ENCODE measurements at regions of chr20 and their contacts with region 1.

Region 1: DNA sequence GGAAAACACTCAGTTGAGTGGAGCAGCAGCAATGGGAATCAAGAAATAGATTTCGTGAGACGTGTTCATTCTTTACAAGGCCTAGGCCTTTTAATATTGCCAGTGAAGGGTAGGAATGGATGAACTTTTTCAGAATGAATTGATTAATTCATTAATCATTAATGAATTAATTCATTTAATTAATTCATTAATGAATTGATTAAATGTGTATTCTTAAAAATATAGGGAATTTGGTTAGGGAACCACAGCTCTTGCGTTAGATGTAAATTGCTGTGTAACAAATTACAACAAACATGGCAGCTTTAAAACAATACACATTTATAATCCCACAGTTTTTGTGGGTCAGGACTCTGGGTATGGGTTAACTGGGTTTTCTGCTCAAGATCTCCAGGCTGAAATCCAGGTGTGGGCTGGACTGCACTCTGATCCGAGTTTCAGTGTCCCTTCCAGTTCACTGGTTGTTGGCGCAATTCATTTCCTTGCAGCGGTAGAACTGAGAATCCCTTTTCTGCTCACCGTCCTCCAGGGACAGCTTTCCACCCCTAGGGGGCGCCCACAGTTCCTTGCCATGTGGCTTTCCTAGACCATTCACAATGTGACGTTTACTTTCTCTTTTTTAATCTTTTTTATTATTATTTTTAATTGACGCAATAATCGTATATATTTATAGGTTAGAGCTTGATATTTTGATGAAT is 32.8 kb upstream of the BCAS1 start:
- DNase-seq: peak; percentile 61 to 80 (median 76)
- H3K4me3 ChIP-seq: no peak overlapping the region
- H3K27ac ChIP-seq: no peak overlapping the region
- H3K4me1 ChIP-seq: peaks cover 0 to 4% (median 0%) of the 10 kb centered on the region in 4 experiments
- H3K27me3 ChIP-seq: no peaks in the 10 kb centered on the region

Region 2: GRCh38 chr20:54025251-54025771 is 77.9 kb before region 1 on chr20:
- CTCF ChIA-PET with region 1: no interaction called
- POLR2A ChIA-PET with region 1: no interaction called
- DNase-seq: no peak
- H3K4me3 ChIP-seq: no peak overlapping the region
- H3K27ac ChIP-seq: no peak overlapping the region
- H3K4me1 ChIP-seq: peaks cover 0 to 5% (median 0%) of the 10 kb centered on the region in 4 experiments
- H3K27me3 ChIP-seq: no peaks in the 10 kb centered on the region

Region 3: GRCh38 chr20:54083459-54083858 is 19.8 kb before region 1 on chr20:
- CTCF ChIA-PET with region 1: interaction called, 11 read pairs
- POLR2A ChIA-PET with region 1: no interaction called
- DNase-seq: peak in 1 of 3 donors; percentile 25
- H3K4me3 ChIP-seq: no peak overlapping the region
- H3K27ac ChIP-seq: no peak overlapping the region
- H3K4me1 ChIP-seq: peaks cover 6 to 36% (median 21%) of the 10 kb centered on the region in 4 experiments
- H3K27me3 ChIP-seq: no peaks in the 10 kb centered on the region

Region 4: GRCh38 chr20:54199721-54200176 is 96.5 kb after region 1 on chr20:
- CTCF ChIA-PET with region 1: interaction called, 183 read pairs
- POLR2A ChIA-PET with region 1: no interaction called
- DNase-seq: peak; percentile 66 to 80 (median 72)
- H3K4me3 ChIP-seq: no peak overlapping the region
- H3K27ac ChIP-seq: no peak overlapping the region
- H3K4me1 ChIP-seq: peaks cover 0 to 13% (median 5%) of the 10 kb centered on the region in 4 experiments
- H3K27me3 ChIP-seq: no peaks in the 10 kb centered on the region

Region 5: DNA sequence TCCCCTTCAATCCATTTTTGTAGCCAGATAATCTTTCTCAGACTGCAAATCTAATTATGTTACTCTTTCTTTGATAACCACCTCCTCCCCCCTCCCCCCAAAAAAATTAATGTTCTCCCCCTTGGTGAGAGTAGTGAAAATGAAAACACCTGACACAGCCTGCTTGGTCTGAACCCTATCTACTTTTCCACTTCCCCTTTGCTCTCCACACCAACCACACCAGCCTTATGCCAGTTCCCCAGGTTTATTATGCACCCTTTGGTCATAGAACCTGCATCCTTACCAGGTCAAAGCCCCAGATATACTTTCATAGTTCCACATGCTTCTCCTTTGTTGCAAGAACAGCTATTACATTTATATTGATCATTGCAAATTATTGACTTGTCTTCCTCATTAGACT is 124.0 kb after region 1 on chr20:
- CTCF ChIA-PET with region 1: no interaction called
- POLR2A ChIA-PET with region 1: no interaction called
- DNase-seq: peak in 2 of 3 donors; percentile 55 to 69
- H3K4me3 ChIP-seq: no peak overlapping the region
- H3K27ac ChIP-seq: no peak overlapping the region
- H3K4me1 ChIP-seq: peaks cover 0 to 10% (median 0%) of the 10 kb centered on the region in 4 experiments
- H3K27me3 ChIP-seq: no peaks in the 10 kb centered on the region

Measured in common myeloid progenitor, CD34-positive (primary cell).